Activated naive CD4-positive, alpha-beta T cell treated with anti-CD3 and anti-CD28 coated beads for 36 hours (primary cell): ENCODE measurements at regions of chr2 and their contacts with region 1.

Region 1: DNA sequence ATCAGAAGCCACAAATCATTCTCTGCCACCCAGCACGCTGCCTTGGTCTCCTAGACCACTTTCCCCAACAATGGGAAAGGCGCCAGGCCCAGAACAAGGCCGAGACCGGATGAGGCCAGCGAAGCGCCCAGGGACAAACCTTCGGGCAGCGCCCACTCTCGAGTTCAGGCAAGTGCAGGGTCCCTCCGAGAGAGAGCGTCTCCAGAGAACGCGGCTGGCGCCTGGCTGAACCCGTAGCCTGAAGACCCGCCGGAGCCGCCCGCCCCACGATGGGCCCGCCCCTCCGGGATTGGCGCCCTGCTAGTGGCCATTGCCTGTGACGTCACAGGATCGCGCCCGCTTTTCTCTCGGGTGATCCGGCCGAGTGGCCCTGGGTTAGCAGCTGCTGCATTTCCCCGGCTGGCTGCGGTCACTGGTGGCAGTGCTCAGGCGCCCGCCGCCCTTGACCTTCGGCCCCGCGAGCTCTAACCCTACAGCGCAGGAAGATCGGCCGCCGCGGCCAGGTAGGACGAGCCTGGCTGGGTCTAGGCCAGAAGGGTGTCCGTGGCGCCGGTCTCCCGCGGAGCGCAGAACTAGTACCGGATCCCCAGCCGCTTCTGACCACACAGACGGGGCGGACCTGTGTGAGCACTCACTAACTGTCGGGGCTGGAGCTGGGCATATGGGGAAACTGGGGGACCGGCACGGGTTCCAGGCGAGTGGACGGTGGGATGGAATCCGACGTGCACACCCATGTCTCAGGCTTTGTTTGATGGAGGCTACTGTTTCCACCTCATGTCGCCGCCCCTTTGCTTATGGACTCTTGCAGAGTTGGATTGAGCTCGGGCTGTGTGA is at the start of gene FAHD2A:
- DNase-seq: peak; percentile 98
- H3K4me3 Mint-ChIP-seq: peak within 1 kb of the TSS; percentile 95
- H3K27ac Mint-ChIP-seq: peak within 1 kb of the TSS; percentile 86
- H3K4me1 Mint-ChIP-seq: peaks cover 18% of the 10 kb centered on the region
- H3K27me3 Mint-ChIP-seq: no peaks in the 10 kb centered on the region
- total RNA-seq, gene FAHD2A: 49.3 to 50.7 TPM

Region 2: GRCh38 chr2:95121407-95122196 is 281.0 kb before region 1 on chr2 and contains the start of gene MRPS5:
- CTCF ChIA-PET with region 1: no interaction called
- intact Hi-C with region 1: loop called (anchors 1 kb)
- DNase-seq: peak; percentile 90
- H3K4me3 Mint-ChIP-seq: peak within 1 kb of the TSS; percentile 93
- H3K27ac Mint-ChIP-seq: peak within 1 kb of the TSS; percentile 90
- H3K4me1 Mint-ChIP-seq: peaks cover 40% of the 10 kb centered on the region
- H3K27me3 Mint-ChIP-seq: no peaks in the 10 kb centered on the region
- total RNA-seq, gene MRPS5: 90.4 to 96.0 TPM

Region 3: GRCh38 chr2:95165129-95166064 is 237.2 kb before region 1 on chr2 and contains the start of gene ZNF2:
- CTCF ChIA-PET with region 1: no interaction called
- intact Hi-C with region 1: loop called (anchors 1 kb)
- DNase-seq: peak; percentile 99
- H3K4me3 Mint-ChIP-seq: peak within 1 kb of the TSS; percentile 99
- H3K27ac Mint-ChIP-seq: peak within 1 kb of the TSS; percentile 89
- H3K4me1 Mint-ChIP-seq: peaks cover 22% of the 10 kb centered on the region
- H3K27me3 Mint-ChIP-seq: no peaks in the 10 kb centered on the region
- total RNA-seq, gene ZNF2: 2.6 to 3.1 TPM

Region 4: DNA sequence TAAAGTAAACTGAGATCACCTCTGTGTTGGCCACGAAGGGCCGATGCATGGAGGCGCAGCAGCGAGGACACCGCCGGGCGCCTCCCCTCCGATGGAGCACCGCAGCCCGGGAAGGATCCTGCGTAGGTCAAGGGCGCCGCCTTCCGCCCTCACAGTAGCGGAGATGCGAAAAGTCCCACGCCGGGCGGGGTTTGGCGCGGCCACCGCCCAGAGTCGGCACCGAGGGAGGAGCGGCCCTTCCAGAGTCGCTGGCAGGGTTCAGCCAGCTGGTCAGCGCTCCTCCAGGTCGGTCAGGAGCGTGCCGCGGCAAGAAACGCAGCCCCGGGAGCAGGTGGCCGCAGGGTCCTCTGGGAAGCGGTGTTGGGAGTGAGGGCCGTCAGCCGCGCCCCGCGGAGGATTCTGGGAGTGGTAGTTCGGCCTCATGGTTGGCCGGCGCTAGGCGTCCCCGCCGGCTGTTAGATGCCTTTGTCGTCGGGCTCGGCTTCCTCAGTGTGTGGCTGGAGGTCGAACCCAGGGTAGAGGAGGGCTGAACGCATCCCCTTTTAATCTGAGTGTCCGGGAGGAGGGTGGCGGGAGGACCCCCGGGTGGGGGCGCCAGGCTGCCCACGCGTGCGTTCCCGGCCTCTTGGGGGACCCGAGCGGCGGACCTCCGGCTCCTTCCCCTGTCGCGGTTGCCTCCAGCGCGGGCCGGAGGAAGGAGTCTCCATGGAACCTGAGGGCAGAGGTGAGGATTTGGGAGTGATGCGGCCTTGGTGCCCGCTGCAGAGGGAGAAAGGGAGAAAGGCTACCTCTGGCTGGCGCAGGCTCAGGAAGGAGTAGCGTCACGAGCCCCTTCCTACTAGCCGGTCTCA is 195.3 kb before region 1 on chr2 and contains the start of gene ZNF892:
- CTCF ChIA-PET with region 1: no interaction called
- intact Hi-C with region 1: loop called (anchors 2 kb)
- DNase-seq: peak; percentile 86
- H3K4me3 Mint-ChIP-seq: peak within 1 kb of the TSS; percentile 88
- H3K27ac Mint-ChIP-seq: peak within 1 kb of the TSS; percentile 57
- H3K4me1 Mint-ChIP-seq: peaks cover 12% of the 10 kb centered on the region
- H3K27me3 Mint-ChIP-seq: no peaks in the 10 kb centered on the region
- total RNA-seq, gene ZNF892: 2.7 to 3.1 TPM

Region 5: DNA sequence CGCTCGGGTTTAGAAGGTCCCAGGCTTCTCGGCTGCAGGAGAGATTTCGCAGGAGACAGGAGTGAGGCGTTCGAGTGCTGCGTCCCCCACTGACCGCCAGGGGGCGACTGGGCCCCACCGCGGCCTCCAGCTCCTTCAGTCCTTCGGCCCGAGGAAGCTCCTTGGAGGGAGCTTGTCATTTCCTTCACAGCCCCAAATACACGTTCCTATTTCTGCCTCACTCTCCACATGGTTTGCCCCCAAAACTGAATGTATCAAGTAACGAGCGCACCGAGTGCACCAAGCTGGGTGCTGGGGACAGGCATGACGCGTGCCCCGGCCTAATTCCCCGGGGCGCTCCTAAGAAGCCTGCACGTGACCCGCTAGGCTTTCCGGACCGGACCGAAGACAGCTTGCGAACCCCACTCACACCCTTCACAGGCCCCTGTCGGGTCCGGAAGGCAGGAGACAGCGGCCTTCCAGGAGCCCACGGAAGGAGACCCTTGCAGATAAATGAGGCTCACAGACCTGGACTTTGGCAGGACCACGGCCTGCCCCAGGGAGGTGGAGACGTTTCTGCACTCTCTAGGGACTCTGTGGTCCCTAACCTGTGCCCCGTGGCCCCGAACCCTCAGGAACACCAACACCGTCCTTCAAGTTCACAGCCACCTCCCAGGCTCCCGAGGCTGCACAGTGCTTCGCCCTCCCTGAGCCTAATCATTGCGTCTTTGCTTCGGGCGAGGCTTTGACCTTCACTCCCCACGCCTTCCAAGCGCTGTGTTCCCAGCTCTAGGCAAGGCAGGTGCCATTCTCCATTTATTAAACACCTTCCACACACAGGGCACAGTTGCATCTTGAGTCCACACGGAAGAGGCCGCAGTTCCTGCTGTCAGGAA is 13.1 kb before region 1 on chr2:
- CTCF ChIA-PET with region 1: interaction called, 41 read pairs
- intact Hi-C with region 1: no loop called
- DNase-seq: peak; percentile 62
- H3K4me3 Mint-ChIP-seq: no peak overlapping the region
- H3K27ac Mint-ChIP-seq: no peak overlapping the region
- H3K4me1 Mint-ChIP-seq: no peaks in the 10 kb centered on the region
- H3K27me3 Mint-ChIP-seq: no peaks in the 10 kb centered on the region

Region 6: GRCh38 chr2:95526360-95527341 is 124.1 kb after region 1 on chr2:
- CTCF ChIA-PET with region 1: interaction called, 4 read pairs
- intact Hi-C with region 1: loop called (anchors 5 kb)
- DNase-seq: peak; percentile 70
- H3K4me3 Mint-ChIP-seq: peak overlapping the region; percentile 90
- H3K27ac Mint-ChIP-seq: no peak overlapping the region
- H3K4me1 Mint-ChIP-seq: peaks cover 23% of the 10 kb centered on the region
- H3K27me3 Mint-ChIP-seq: no peaks in the 10 kb centered on the region

Region 7: GRCh38 chr2:95728878-95729596 is 326.4 kb after region 1 on chr2:
- CTCF ChIA-PET with region 1: no interaction called
- intact Hi-C with region 1: loop called (anchors 1 kb)
- DNase-seq: peak; percentile 69
- H3K4me3 Mint-ChIP-seq: no peak overlapping the region
- H3K27ac Mint-ChIP-seq: no peak overlapping the region
- H3K4me1 Mint-ChIP-seq: no peaks in the 10 kb centered on the region
- H3K27me3 Mint-ChIP-seq: peaks cover 3% of the 10 kb centered on the region